ENCODE measurements at regions of chr5 and their contacts with region 1.

Region 1: GRCh38 chr5:114449860-114450421 is 88.1 kb downstream of the KCNN2 start:
- DNase-seq: peak; percentile 60
- H3K4me3 ChIP-seq: no peak overlapping the region
- H3K27ac ChIP-seq: no peak overlapping the region
- H3K4me1 ChIP-seq: peaks cover 0 to 3% (median 0%) of the 10 kb centered on the region in 4 donors
- H3K27me3 ChIP-seq: no peaks in the 10 kb centered on the region
- CTCF ChIP-seq: peak; percentile 66 to 75 (median 71)
- EP300 ChIP-seq: no peak
- POLR2A ChIP-seq: no peak

Region 2: DNA sequence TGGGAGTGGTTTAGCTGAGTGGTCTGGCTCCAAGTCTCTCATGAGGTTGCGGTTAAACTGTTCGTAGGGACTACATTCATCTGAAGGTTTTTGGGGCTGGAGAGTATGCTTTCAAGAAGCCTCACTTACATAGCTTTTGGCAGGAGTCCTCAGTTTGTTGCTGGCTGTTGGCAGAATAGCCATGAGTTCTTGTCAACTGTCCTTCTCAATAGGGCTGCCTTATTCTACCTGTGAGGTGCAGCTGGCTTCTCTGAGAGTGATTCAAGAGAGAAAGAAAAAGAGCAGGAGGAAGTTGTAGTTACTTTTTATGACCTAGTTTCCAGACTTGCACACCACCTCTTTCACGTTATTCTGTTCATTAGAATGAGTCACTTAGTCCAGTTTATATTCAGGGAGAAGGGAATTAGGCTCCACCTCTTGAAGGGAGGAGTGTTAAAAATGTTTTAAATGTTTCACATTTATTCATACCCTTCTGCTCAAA is 903.2 kb before region 1 on chr5:
- in situ Hi-C with region 1: no loop called
- intact Hi-C with region 1: no loop called
- DNase-seq: no peak
- H3K4me3 ChIP-seq: no peak overlapping the region
- H3K27ac ChIP-seq: peak overlapping the region in 3 of 4 donors; percentile 3 to 50 (median 15)
- H3K4me1 ChIP-seq: peaks cover 0 to 12% (median 0%) of the 10 kb centered on the region in 4 donors
- H3K27me3 ChIP-seq: no peaks in the 10 kb centered on the region
- CTCF ChIP-seq: no peak
- EP300 ChIP-seq: no peak
- POLR2A ChIP-seq: no peak

Region 3: GRCh38 chr5:113663880-113664541 is 785.9 kb before region 1 on chr5:
- in situ Hi-C with region 1: loop called in 1 of 4 experiments (anchors 25 kb)
- intact Hi-C with region 1: no loop called
- DNase-seq: peak; percentile 29
- H3K4me3 ChIP-seq: no peak overlapping the region
- H3K27ac ChIP-seq: no peak overlapping the region
- H3K4me1 ChIP-seq: no peaks in the 10 kb centered on the region
- H3K27me3 ChIP-seq: no peaks in the 10 kb centered on the region
- CTCF ChIP-seq: peak in 2 of 5 experiments; percentile 18
- EP300 ChIP-seq: no peak
- POLR2A ChIP-seq: no peak

Region 4: DNA sequence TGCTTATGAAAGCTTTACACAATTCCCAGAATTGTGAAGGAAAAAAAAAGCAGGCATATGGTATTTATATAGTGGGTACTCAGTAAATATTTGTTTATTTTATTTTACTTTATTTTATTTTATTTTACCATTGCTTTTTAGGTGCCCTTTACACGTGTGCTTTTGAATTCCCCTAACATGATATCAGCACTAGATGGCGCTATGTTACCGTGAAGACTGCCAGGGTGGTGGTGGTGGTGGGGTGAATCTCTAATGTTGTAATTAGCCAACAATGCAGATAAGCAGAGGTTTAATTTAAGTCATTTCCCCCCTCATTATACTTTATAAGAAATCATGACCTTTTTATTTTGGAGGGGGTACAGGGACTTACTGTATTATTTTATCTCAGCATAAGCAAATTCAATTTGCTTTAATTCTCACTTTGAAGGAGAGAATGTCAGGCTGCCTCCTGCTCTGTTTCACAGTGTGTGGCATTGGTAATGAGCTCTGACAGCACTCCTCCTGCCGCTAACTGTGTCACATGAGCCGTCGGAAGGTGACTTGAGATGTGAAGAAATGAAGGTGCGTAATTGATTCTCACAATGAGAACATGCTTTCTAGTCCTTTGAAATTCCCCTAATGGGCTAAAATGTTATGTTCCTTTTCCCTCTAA is 770.9 kb before region 1 on chr5:
- in situ Hi-C with region 1: loop called (anchors 10 to 25 kb)
- intact Hi-C with region 1: loop called (anchors 1 kb)
- DNase-seq: peak; percentile 9
- H3K4me3 ChIP-seq: no peak overlapping the region
- H3K27ac ChIP-seq: no peak overlapping the region
- H3K4me1 ChIP-seq: no peaks in the 10 kb centered on the region
- H3K27me3 ChIP-seq: no peaks in the 10 kb centered on the region
- CTCF ChIP-seq: peak; percentile 59 to 68 (median 66)
- EP300 ChIP-seq: no peak
- POLR2A ChIP-seq: no peak

Region 5: GRCh38 chr5:113689647-113690046 is 760.3 kb before region 1 on chr5:
- in situ Hi-C with region 1: loop called in 2 of 4 experiments (anchors 25 kb)
- intact Hi-C with region 1: loop called (anchors 2 kb)
- DNase-seq: no peak
- H3K4me3 ChIP-seq: no peak overlapping the region
- H3K27ac ChIP-seq: no peak overlapping the region
- H3K4me1 ChIP-seq: no peaks in the 10 kb centered on the region
- H3K27me3 ChIP-seq: peaks cover 26% of the 10 kb centered on the region
- CTCF ChIP-seq: no peak
- EP300 ChIP-seq: no peak
- POLR2A ChIP-seq: no peak

Region 6: GRCh38 chr5:114358329-114358728 is 91.6 kb before region 1 on chr5:
- in situ Hi-C with region 1: no loop called
- intact Hi-C with region 1: no loop called
- DNase-seq: no peak
- H3K4me3 ChIP-seq: no peak overlapping the region
- H3K27ac ChIP-seq: no peak overlapping the region
- H3K4me1 ChIP-seq: peaks cover 11 to 22% (median 19%) of the 10 kb centered on the region in 4 donors
- H3K27me3 ChIP-seq: peaks cover 53% of the 10 kb centered on the region
- CTCF ChIP-seq: no peak
- EP300 ChIP-seq: no peak
- POLR2A ChIP-seq: no peak

Measured in transverse colon (tissue), 4 donors.